ENCODE measurements at regions of chr6 and their contacts with region 1.

Region 1: DNA sequence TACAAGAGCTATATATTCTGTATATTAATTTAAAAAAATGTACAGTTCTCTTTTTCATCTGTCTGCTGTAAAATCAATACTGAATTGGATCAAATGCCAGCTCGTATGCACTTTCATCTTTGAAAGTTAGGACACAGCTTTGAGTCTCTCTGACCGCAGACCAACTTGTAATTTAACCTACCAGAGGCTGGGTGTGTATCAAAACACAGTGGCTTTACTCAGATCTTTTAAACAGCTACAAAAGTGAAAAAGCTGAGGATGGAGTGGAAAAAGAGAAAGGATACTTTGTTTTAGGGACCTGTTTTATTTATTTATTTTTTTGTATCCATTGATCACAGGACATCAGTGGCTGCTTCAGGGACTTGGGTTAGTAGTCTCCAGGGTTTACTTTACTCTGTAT is 44.1 kb downstream of the KIAA0408 start:
- DNase-seq: no peak
- ATAC-seq: no peak
- H3K4me3 ChIP-seq: no peak overlapping the region
- H3K27ac ChIP-seq: no peak overlapping the region
- H3K4me1 ChIP-seq: peaks cover 0 to under 1% (median 0%) of the 10 kb centered on the region in 12 donors
- H3K27me3 ChIP-seq: no peaks in the 10 kb centered on the region
- CTCF ChIP-seq: no peak
- POLR2A ChIP-seq: no peak

Region 2: DNA sequence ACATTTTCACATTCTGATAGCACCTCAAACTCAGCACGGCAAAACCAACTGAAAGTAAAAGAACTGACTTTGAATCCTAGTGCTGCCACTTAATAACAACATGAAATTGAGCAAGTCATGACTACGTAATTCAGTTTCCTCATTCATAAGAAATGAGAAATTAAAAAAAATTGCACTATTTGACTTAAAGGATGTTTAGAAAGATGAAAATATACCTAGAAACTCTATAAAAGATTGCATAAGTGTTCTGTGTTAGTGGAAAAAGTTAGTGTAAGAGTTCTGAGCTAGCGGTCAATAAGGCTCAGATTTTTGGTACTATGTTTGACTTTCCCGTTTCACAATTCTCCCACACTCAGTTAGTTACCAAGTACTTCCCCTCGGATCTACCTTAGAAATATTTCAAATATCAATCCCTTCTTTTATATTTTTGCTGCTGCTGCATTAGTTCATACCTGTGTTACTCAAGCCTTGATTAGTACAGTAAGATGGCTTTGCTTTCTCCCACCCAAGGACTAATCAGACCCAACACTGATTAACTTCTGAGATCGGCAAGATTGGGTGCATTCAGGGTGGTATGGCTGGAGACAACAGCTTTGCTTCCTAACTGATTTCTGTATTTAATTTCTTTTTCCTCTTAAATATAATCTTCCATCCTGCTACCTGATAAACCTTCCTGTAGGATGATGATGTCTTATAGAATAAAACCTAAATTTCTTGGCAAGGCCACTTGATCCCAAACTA is 97.5 kb before region 1 on chr6:
- intact Hi-C with region 1: loop called in 1 of 10 experiments (anchors 10 kb)
- DNase-seq: no peak
- ATAC-seq: no peak
- H3K4me3 ChIP-seq: peak overlapping the region in 1 of 12 donors; percentile 1
- H3K27ac ChIP-seq: peak overlapping the region in 1 of 12 donors; percentile 44
- H3K4me1 ChIP-seq: peaks cover 0 to 8% (median 0%) of the 10 kb centered on the region in 12 donors
- H3K27me3 ChIP-seq: no peaks in the 10 kb centered on the region
- CTCF ChIP-seq: no peak
- POLR2A ChIP-seq: no peak

Region 3: DNA sequence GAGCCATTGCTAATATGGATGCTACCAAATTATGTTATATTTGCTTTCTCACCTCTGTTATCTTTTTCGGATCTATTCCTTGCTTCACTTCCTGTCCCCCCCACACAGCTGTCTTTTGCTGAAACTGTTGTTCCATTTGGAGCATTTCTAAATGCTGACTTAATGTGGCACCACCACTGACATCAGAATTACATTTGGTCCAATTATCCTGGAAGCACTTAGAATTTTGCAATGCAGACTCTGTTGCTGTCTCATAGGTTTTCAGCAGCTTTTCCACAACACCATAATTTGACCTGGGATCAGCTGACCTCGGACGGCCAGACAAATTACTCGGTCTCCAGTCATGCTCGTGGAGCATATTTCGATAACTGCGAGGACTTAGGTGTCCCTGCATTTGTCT is 31.3 kb after region 1 on chr6:
- intact Hi-C with region 1: no loop called
- DNase-seq: no peak
- ATAC-seq: no peak
- H3K4me3 ChIP-seq: no peak overlapping the region
- H3K27ac ChIP-seq: no peak overlapping the region
- H3K4me1 ChIP-seq: no peaks in the 10 kb centered on the region
- H3K27me3 ChIP-seq: no peaks in the 10 kb centered on the region
- CTCF ChIP-seq: no peak
- POLR2A ChIP-seq: no peak

Measured in heart left ventricle (tissue), 16 donors.